HEK293 (cell line): ENCODE measurements at regions of chr12 and their contacts with region 1.

Region 1: DNA sequence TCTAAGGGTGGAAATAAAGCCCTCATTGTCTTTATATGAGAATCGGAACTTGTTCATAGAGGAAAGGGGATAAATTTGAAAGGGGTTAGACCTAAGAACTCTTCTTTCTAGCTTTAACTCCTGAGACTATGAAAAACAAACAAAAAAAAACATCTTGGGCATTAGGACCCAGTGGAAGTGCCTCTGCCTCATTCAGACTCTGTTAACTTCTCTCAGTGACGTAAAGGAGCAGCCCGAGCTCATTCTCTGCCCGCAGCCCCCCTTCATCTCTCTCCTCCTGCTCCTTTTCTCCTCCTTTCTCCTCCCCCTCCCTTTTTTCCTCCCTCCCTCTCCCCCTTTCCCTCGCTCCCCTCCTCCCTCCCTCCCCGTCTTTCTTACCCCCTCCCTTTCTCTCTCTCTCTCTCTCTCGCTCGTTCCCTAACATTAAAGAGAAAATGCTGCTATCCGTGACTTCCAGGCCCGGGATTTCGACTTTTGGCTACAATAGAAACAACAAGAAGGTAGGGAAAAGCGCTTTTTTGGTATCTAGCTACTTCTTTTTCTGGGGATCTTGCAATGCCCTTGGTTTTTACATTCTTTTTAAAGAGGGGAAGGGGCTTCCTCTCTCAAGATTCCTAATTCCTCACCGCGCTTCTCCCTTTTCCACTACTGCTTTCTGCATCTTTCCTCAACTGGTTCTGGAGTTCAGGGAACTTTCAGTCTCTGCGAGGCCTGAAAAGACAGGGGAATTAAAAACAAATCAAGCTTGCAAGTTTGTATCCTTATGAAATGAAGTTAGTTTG is at the start of gene RBMS2:
- H3K4me3 ChIP-seq: peak within 1 kb of the TSS; percentile 29
- H3K27ac ChIP-seq: peak within 1 kb of the TSS; percentile 67
- H3K4me1 ChIP-seq: peaks cover 3% of the 10 kb centered on the region; the same call in 1 of the 2 replicates
- CTCF ChIP-seq: no peak

Region 2: GRCh38 chr12:56307221-56307965 is 214.4 kb before region 1 on chr12:
- CTCF ChIA-PET with region 1: no interaction called
- POLR2A ChIA-PET with region 1: no interaction called
- H3K4me3 ChIP-seq: no peak overlapping the region
- H3K27ac ChIP-seq: no peak overlapping the region
- H3K4me1 ChIP-seq: no peaks in the 10 kb centered on the region
- CTCF ChIP-seq: no peak

Region 3: GRCh38 chr12:56571126-56571525 is 49.3 kb after region 1 on chr12:
- CTCF ChIA-PET with region 1: interaction called, 9 read pairs
- POLR2A ChIA-PET with region 1: interaction called, 10 read pairs
- H3K4me3 ChIP-seq: no peak overlapping the region
- H3K27ac ChIP-seq: no peak overlapping the region
- H3K4me1 ChIP-seq: no peaks in the 10 kb centered on the region
- CTCF ChIP-seq: no peak